ENCODE measurements at regions of chr3 and their contacts with region 1.

Region 1: GRCh38 chr3:170622369-170623159 is 36.7 kb upstream of the SLC7A14 start:
- DNase-seq: peak; percentile 98
- H3K4me3 ChIP-seq: no peak overlapping the region
- H3K27ac ChIP-seq: peak overlapping the region; percentile 86
- H3K27me3 ChIP-seq: no peaks in the 10 kb centered on the region
- CTCF ChIP-seq: no peak

Region 2: DNA sequence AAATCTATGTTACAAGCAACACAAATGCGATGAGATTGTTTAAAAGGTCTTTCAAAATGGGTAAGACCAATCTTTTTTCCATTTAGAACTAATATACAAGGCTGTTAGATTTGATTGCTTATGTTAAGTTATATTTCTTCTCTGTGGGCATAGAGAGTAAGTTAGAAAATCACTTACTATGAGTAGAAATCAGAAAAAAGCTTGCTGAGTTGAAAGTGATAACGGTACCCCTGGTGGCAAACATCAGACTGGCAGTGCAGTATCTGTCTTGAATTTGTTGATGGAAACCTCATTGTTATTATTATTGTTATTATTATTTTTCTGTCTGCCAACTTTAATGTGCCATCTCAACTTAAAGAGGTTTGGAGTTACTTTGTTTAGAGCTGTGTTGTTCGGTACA is 191.5 kb before region 1 on chr3:
- CTCF ChIA-PET with region 1: interaction called, 3 read pairs
- POLR2A ChIA-PET with region 1: interaction called, 11 read pairs
- DNase-seq: no peak
- H3K4me3 ChIP-seq: no peak overlapping the region
- H3K27ac ChIP-seq: no peak overlapping the region
- H3K27me3 ChIP-seq: no peaks in the 10 kb centered on the region
- CTCF ChIP-seq: peak; percentile 25